ENCODE measurements at regions of chr1 and their contacts with region 1.

Region 1: DNA sequence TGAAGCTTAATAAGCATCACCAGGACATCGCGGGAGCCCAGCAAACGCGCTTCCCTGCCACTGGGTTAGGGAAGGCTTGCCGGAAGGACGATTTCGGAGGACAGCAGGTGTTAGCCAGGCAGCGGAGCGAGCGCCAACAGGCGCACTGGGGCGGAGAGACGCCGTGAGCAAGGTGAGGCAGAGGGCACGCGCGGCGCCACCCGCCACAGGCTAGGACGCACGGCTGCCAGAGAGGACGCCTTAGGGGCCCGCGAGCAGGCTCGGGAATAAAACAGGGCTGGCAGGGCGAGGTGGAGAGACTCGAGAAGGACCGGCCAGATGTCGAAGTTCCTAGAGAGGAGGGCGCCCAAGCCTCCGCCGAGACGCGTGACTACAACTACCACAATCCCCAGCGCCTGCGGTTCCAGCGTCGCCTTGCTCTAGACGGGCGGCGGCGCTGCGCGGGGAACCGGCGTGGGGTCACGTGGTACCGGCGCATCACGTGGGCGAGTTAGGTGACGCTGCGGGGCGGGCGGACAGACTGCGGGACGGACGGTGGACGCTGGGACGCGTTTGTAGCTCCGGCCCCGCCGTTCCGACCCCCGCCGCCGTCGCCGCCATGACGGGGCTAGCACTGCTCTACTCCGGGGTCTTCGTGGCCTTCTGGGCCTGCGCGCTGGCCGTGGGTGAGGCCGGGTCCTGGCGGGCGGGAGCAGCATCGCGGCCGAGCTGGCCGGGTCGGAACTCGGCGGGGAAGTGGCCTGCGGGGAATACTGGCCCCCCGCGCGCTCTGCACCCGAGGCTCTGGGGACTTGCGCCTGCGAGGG is at the start of gene ATP6V0B:
- DNase-seq: peak; percentile 86 to 94 (median 94)
- H3K4me3 ChIP-seq: peak within 1 kb of the TSS; percentile 85
- H3K4me3 Mint-ChIP-seq: peak within 1 kb of the TSS; percentile 86 to 98 (median 94)
- H3K27ac ChIP-seq: peak within 1 kb of the TSS; percentile 79
- H3K27ac Mint-ChIP-seq: peak within 1 kb of the TSS; percentile 86 to 99 (median 93)
- H3K4me1 ChIP-seq: peaks cover 46% of the 10 kb centered on the region
- H3K4me1 Mint-ChIP-seq: peaks cover 57 to 67% (median 66%) of the 10 kb centered on the region in 3 donors
- H3K27me3 ChIP-seq: no peaks in the 10 kb centered on the region
- H3K27me3 Mint-ChIP-seq: peaks cover 0 to 6% of the 10 kb centered on the region in 2 donors
- total RNA-seq, gene ATP6V0B: 184 to 205 TPM

Region 2: DNA sequence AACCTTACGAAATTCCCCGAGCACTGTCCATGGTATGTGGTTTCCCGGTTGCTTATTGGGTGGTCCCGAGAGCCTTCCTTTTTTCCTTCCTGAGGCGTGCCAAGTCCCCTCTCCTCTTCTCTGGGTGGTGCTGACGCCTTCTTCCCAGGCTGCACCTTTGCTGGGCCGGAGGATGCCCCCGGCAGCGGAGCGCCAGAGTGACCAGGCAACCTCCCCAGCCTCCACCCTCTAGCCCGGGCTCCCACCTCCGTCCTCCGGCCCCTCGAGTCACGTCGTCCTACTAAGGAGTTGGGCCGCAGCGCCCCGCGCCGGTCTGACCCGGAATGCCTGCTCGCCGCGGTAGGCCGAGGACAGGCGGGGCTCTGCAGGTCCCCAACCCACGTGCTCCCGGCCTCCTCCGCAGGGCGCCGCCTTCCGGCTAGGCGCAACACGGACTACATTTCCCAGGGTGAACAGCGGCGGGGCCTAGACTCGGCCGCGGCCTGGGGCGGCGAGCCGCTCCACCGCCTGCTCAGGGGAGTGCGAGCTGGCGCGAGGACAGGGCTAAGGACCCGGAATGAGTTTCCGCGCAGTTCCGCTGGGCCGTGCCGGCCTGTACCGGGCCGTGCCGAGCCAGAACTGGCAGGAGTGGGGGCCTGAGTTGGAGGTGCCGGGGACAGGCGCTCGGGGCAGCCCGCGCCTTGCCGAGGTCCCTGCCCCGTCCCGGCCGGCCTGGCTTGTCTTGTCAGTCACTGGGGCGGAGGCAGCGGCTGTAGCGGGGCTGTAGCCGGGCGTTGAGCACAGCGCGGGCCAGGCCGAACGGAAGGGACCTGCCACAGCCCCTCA is 28.2 kb before region 1 on chr1 and contains the start of gene IPO13:
- CTCF ChIA-PET with region 1: interaction called, 12 read pairs
- POLR2A ChIA-PET with region 1: interaction called, 9 read pairs
- DNase-seq: peak; percentile 91 to 96 (median 96)
- H3K4me3 ChIP-seq: peak within 1 kb of the TSS; percentile 83
- H3K4me3 Mint-ChIP-seq: peak within 1 kb of the TSS; percentile 83 to 94 (median 90)
- H3K27ac ChIP-seq: peak within 1 kb of the TSS; percentile 95
- H3K27ac Mint-ChIP-seq: peak within 1 kb of the TSS; percentile 67 to 99 (median 94)
- H3K4me1 ChIP-seq: peaks cover 26% of the 10 kb centered on the region
- H3K4me1 Mint-ChIP-seq: peaks cover 45 to 66% (median 47%) of the 10 kb centered on the region in 3 donors
- H3K27me3 ChIP-seq: no peaks in the 10 kb centered on the region
- H3K27me3 Mint-ChIP-seq: no peaks in the 10 kb centered on the region
- total RNA-seq, gene IPO13: 28.9 to 32.1 TPM

Region 3: GRCh38 chr1:43963890-43964289 is 10.8 kb before region 1 on chr1:
- CTCF ChIA-PET with region 1: no interaction called
- POLR2A ChIA-PET with region 1: no interaction called
- DNase-seq: no peak
- H3K4me3 ChIP-seq: no peak overlapping the region
- H3K4me3 Mint-ChIP-seq: no peak overlapping the region
- H3K27ac ChIP-seq: no peak overlapping the region
- H3K27ac Mint-ChIP-seq: no peak overlapping the region
- H3K4me1 ChIP-seq: no peaks in the 10 kb centered on the region
- H3K4me1 Mint-ChIP-seq: no peaks in the 10 kb centered on the region
- H3K27me3 ChIP-seq: no peaks in the 10 kb centered on the region
- H3K27me3 Mint-ChIP-seq: no peaks in the 10 kb centered on the region

Region 4: DNA sequence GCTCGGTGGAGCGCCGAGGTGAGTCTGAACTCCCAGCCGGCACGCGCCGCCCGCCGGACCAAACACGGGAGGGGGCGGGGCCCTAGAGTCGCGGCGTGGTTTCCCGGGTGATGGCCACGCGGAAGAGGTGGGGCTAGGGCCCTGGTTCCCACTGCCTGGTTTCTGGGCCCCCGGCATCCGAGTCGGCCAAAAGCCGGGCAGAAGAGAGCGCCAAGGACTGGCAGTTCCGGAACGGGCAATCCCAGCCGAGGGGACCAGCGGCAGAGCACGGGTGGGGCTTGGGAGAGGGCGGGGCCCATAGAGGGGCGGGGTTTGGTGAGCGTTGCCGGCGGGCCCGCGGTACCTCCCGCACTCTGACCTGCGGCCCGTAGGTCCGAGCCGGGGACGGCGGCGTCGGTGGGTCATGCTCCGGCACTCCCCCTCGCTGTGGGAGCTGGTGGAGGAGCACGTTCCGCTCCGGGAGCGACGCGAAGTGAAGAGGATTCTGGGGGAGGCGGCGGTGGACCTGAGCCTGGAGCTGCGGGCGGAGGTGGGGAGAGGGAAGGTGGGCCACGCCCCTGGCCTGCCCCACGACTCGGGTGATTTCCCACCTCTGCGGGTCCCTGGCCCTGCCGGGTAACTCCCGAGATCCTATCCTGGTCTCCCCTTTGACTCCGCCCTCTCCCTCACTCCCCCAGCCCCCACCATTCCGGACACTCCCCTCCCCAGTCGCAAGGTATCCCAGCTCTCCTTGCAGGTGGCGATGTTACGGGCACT is 17.0 kb after region 1 on chr1 and contains the start of gene CCDC24:
- CTCF ChIA-PET with region 1: interaction called, 3 read pairs
- POLR2A ChIA-PET with region 1: interaction called, 10 read pairs
- DNase-seq: peak; percentile 67 to 85 (median 71)
- H3K4me3 ChIP-seq: peak within 1 kb of the TSS; percentile 60
- H3K4me3 Mint-ChIP-seq: peak within 1 kb of the TSS; percentile 91 to 98 (median 94)
- H3K27ac ChIP-seq: peak within 1 kb of the TSS; percentile 51
- H3K27ac Mint-ChIP-seq: peak within 1 kb of the TSS; percentile 47 to 98 (median 92)
- H3K4me1 ChIP-seq: peaks cover 8% of the 10 kb centered on the region
- H3K4me1 Mint-ChIP-seq: peaks cover 10 to 21% (median 14%) of the 10 kb centered on the region in 3 donors
- H3K27me3 ChIP-seq: no peaks in the 10 kb centered on the region
- H3K27me3 Mint-ChIP-seq: no peaks in the 10 kb centered on the region
- total RNA-seq, gene CCDC24: 2.7 to 3.4 TPM

Region 5: DNA sequence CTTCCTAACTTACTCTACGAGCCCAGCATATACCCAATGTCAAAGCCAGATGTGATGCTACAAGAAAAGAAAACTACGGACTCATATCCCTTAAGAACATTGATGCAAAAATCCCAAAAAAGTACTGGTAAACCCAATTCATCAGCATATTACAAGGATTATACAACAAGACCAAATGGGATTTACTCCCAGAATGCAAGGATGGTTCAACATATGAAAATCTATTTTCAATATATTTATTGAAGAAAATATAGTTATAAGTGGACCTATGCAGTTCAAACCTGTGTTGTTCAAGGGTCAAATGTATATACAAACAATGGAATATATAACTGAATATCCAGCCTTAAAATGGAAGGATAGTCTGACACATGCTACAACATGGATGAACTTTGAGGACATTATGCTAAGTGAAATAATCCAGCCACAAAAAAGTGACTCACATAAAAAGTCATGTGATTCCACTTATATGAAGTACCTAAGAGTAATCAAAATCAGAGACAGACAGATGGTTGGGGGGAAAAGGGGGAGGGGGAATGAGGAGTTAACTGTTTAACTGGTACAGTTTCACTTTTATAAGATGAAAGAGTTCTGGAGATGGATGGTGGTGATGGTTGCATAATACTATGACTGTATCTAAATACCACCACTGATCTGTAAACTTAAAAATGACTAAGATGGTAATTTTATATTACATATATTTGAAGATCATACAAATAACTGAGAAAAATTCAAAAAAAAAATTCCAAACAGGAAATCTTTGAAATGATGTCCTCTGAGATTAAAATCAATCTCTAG is 170.5 kb after region 1 on chr1:
- CTCF ChIA-PET with region 1: no interaction called
- POLR2A ChIA-PET with region 1: no interaction called
- DNase-seq: no peak
- H3K4me3 ChIP-seq: no peak overlapping the region
- H3K4me3 Mint-ChIP-seq: no peak overlapping the region
- H3K27ac ChIP-seq: no peak overlapping the region
- H3K27ac Mint-ChIP-seq: no peak overlapping the region
- H3K4me1 ChIP-seq: no peaks in the 10 kb centered on the region
- H3K4me1 Mint-ChIP-seq: no peaks in the 10 kb centered on the region
- H3K27me3 ChIP-seq: no peaks in the 10 kb centered on the region
- H3K27me3 Mint-ChIP-seq: peaks cover 7 to 22% of the 10 kb centered on the region in 2 donors

Measured in CD8-positive, alpha-beta memory T cell (primary cell).